Activated T-helper 2 cell treated with anti-CD3 and anti-CD28 coated beads, Interferon-gamma antibody, Interleukin-2, Interleukin-4, amounts not matched to agents 10 μg/mL and 5 μg/mL and 100 μg/mL, durations not matched to agents 14 hours and 24 hours and 36 hours (primary cell): ENCODE measurements at regions of chr16 and their contacts with region 1.

Region 1: GRCh38 chr16:83215406-83216001 is 588.7 kb downstream of the CDH13 start:
- DNase-seq: peak; percentile 16
- H3K4me3 Mint-ChIP-seq: no peak overlapping the region
- H3K27ac Mint-ChIP-seq: no peak overlapping the region
- H3K4me1 Mint-ChIP-seq: no peaks in the 10 kb centered on the region
- H3K27me3 Mint-ChIP-seq: no peaks in the 10 kb centered on the region

Region 2: GRCh38 chr16:82639666-82640336 is 575.7 kb before region 1 on chr16:
- intact Hi-C with region 1: loop called (anchors 10 kb)
- DNase-seq: peak; percentile 35
- H3K4me3 Mint-ChIP-seq: no peak overlapping the region
- H3K27ac Mint-ChIP-seq: no peak overlapping the region
- H3K4me1 Mint-ChIP-seq: peaks cover 32% of the 10 kb centered on the region
- H3K27me3 Mint-ChIP-seq: peaks cover 2% of the 10 kb centered on the region

Region 3: GRCh38 chr16:83113317-83113716 is 102.2 kb before region 1 on chr16:
- intact Hi-C with region 1: loop called (anchors 10 kb)
- DNase-seq: no peak
- H3K4me3 Mint-ChIP-seq: no peak overlapping the region
- H3K27ac Mint-ChIP-seq: no peak overlapping the region
- H3K4me1 Mint-ChIP-seq: no peaks in the 10 kb centered on the region
- H3K27me3 Mint-ChIP-seq: peaks cover 2% of the 10 kb centered on the region